ENCODE measurements at regions of chr1 and their contacts with region 1.

Region 1: DNA sequence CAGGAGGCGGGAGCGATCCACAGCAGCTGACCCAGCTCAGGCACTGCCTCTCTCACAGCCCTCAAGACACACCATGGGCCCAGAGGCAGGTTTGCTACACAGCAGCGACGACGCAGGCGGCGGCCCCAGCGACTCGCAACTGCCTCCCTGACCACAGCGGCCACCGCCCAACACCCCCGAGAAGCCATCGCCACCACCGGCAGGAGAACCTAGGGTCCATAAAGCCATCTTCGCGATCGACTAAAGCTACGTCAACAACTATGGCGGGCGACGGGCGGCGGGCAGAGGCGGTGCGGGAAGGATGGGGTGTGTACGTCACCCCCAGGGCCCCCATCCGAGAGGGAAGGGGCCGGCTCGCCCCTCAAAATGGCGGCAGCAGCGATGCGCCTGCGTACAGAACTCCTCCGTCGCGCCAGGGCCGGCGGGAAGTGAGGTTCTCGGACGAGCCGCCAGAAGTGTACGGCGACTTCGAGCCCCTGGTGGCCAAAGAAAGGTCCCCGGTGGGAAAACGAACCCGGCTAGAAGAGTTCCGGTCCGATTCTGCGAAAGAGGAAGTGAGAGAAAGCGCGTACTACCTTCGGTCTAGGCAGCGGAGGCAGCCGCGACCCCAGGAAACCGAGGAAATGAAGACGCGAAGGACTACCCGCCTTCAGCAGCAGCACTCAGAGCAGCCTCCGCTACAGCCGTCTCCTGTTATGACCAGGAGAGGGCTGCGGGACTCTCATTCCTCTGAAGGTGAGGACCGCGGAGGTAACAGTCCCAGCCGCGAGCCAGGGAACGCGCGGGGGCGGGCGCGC is at the start of gene TOR1AIP1:
- DNase-seq: peak; percentile 98
- total RNA-seq, gene TOR1AIP1: 34.4 TPM

Region 2: DNA sequence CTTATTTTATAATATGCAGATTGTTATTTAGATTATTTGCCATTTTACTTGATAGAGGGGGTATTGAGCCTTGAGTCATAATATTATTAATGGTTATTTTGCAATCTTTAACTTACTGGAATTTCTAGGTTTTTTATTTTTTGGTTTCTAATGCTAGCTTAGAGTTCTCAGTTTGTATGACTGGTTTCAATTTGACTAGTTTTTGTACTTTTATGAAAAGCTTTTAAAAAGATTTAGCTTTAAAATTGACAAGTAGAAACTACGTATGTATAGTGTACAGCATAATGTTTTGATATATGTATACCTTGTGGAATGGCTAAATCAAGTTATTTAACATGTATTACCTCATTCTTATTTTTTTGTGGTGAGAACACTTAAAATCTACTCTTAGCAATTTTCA is 113.7 kb after region 1 on chr1:
- intact Hi-C with region 1: no loop called
- DNase-seq: no peak

Region 3: DNA sequence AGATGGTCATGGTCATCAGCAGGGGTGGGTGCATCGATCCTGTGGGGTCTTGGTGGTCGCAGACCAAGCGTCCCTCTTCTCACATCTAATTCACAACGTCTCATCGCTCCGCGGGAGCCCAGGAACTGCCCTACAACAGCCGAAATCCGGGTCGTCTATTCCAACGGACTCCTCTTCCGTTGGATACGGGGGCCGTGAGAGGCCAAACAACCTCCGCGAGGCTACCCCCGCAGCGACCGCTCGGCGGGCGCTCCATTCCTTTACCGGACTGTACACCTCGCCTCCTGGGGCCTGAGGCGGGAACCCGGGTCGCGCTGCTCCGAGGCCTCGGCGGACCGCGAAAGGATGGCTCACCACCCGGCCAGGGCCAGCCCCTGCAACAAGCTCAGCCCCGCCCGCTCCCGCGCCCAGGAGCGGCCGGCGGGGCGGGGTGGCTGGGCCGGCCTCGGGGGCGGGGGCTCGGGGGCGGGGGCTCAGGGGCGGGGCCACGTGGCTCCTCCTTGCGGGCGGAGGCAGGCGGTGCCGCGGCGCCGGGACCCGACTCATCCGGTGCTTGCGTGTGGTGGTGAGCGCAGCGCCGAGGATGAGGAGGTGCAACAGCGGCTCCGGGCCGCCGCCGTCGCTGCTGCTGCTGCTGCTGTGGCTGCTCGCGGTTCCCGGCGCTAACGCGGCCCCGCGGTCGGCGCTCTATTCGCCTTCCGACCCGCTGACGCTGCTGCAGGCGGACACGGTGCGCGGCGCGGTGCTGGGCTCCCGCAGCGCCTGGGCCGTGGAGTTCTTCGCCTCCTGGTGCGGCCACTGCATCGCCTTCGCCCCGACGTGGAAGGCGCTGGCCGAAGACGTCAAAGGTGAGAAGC is 272.1 kb after region 1 on chr1 and contains the start of gene QSOX1:
- intact Hi-C with region 1: loop called (anchors 10 kb)
- DNase-seq: peak; percentile 96
- total RNA-seq, gene QSOX1: 106 TPM